Activated CD4-positive, alpha-beta T cell treated with anti-CD3 and anti-CD28 coated beads, Interleukin-2, amount 10 ng/mL, durations not matched to agents 7 days and 5 days (primary cell): ENCODE measurements at regions of chr1 and their contacts with region 1.

Region 1: GRCh38 chr1:86776108-86776507 is 71.7 kb downstream of the SH3GLB1 start:
- DNase-seq: no peak
- H3K4me3 Mint-ChIP-seq: no peak overlapping the region
- H3K27ac Mint-ChIP-seq: no peak overlapping the region
- H3K4me1 Mint-ChIP-seq: peaks cover 10% of the 10 kb centered on the region
- H3K27me3 Mint-ChIP-seq: no peaks in the 10 kb centered on the region

Region 2: DNA sequence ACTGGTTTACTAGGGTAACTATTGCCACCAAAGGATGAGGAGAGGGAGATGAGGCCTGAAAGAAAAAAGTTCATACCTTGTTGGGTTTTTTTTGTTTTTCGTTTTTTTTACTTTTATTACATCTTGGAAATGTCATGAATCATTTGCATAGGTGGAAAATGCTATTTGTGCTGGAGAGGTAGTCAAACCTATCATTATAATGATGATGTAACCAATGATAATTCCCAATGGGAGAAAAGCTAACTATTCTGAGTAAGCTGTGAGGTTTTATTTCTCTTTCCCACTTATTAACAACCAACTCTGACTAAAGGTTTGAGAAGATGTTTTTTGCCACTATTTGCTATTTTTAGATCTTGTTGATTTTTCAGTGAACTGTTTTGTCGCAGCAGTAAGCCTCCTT is 42.8 kb before region 1 on chr1:
- CTCF ChIA-PET with region 1: no interaction called
- POLR2A ChIA-PET with region 1: no interaction called
- DNase-seq: no peak
- H3K4me3 Mint-ChIP-seq: no peak overlapping the region
- H3K27ac Mint-ChIP-seq: no peak overlapping the region
- H3K4me1 Mint-ChIP-seq: peaks cover 5% of the 10 kb centered on the region
- H3K27me3 Mint-ChIP-seq: no peaks in the 10 kb centered on the region

Region 3: GRCh38 chr1:87084244-87084836 is 308.2 kb after region 1 on chr1:
- CTCF ChIA-PET with region 1: no interaction called
- POLR2A ChIA-PET with region 1: interaction called, 14 read pairs
- DNase-seq: no peak
- H3K4me3 Mint-ChIP-seq: no peak overlapping the region
- H3K27ac Mint-ChIP-seq: no peak overlapping the region
- H3K4me1 Mint-ChIP-seq: peaks cover 9% of the 10 kb centered on the region
- H3K27me3 Mint-ChIP-seq: no peaks in the 10 kb centered on the region